SK-N-SH (cell line): ENCODE measurements at regions of chr3 and their contacts with region 1.

Region 1: DNA sequence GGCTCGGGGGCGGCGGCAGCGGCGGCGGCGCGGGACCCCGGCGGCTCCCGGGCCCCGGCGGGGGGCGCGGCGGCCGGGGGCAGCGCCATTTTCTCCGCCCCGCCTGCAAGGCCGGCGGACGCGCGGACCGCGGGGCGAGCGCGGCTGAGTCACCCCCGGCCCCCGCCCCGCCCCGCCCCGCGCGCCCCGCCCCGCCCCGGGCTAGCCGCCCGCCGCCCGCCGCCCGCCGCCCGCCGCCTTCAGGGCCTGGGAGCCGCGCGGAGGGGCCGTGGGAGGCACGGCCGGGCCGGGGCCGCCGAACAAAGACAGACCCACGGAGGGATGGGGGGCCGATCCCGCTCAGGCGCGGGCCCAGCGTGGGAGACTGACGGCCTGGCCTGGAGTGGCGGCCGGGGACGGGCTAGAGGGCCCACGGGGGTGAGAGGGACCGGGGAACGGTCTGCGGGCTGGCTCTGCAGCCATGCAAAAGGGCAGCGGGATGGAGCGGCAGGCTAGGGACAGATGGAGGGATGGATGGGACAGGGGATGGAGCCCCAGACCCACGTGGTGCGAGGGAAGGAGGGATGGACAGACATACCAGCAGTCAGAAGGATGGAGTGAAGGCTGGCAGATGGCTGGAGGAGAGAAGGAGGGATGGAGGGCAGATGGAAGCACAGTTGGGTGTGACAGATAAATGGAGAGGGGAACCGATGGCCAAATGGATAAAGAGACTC is at the start of gene EIF4E3:
- DNase-seq: peak; percentile 93
- H3K4me3 ChIP-seq: peak within 1 kb of the TSS; percentile 70 to 77
- H3K27ac ChIP-seq: peak within 1 kb of the TSS in 1 of 2 experiments; percentile 66; a peak in 1 of 4 replicates
- H3K4me1 ChIP-seq: peaks cover 0 to 24% of the 10 kb centered on the region in 2 experiments; a peak in 1 of 4 replicates
- H3K27me3 ChIP-seq: peaks cover 8% of the 10 kb centered on the region
- CTCF ChIP-seq: no peak
- EP300 ChIP-seq: no peak
- RAD21 ChIP-seq: no peak
- polyA plus RNA-seq, gene EIF4E3: 0.47 and 0.67 TPM in 2 replicates

Region 2: GRCh38 chr3:71710906-71711494 is 14.4 kb before region 1 on chr3:
- CTCF ChIA-PET with region 1: interaction called, 23 read pairs
- POLR2A ChIA-PET with region 1: interaction called, 3 read pairs
- DNase-seq: peak; percentile 72
- H3K4me3 ChIP-seq: no peak overlapping the region; a peak in 1 of 4 replicates
- H3K27ac ChIP-seq: no peak overlapping the region
- H3K4me1 ChIP-seq: no peaks in the 10 kb centered on the region; a peak in 1 of 4 replicates
- H3K27me3 ChIP-seq: no peaks in the 10 kb centered on the region
- CTCF ChIP-seq: peak; percentile 79
- EP300 ChIP-seq: no peak
- RAD21 ChIP-seq: peak; percentile 93

Region 3: DNA sequence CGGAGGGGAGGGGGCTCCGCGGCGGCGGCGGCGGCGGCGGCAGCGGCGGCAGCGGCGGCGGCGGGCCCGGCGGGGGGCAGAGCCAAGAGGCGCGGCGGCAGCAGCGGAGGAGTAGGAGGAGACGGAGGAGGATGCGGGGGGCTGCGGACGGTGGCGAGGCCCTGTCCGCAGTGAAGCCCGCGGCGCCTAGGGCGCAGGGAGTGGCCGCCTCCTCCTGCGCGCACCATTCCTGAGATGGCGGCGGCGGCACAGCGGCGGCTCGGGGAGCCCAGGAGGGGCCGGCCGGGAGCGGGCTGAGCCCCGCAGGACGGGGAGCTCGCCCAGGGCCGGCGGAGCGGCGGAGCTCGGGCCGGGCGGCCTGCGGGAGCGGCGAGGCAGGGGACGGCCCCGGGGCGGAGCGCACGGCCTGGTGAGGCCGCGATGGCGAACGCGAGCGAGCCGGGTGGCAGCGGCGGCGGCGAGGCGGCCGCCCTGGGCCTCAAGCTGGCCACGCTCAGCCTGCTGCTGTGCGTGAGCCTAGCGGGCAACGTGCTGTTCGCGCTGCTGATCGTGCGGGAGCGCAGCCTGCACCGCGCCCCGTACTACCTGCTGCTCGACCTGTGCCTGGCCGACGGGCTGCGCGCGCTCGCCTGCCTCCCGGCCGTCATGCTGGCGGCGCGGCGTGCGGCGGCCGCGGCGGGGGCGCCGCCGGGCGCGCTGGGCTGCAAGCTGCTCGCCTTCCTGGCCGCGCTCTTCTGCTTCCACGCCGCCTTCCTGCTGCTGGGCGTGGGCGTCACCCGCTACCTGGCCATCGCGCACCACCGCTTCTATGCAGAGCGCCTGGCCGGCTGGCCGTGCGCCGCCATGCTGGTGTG is 28.4 kb after region 1 on chr3 and contains the start of gene GPR27:
- CTCF ChIA-PET with region 1: interaction called, 13 read pairs
- POLR2A ChIA-PET with region 1: interaction called, 3 read pairs
- DNase-seq: peak; percentile 85
- H3K4me3 ChIP-seq: peak within 1 kb of the TSS in 1 of 2 experiments; percentile 55; a peak in 2 of 4 replicates
- H3K27ac ChIP-seq: peak within 1 kb of the TSS in 1 of 2 experiments; percentile 69; a peak in 1 of 4 replicates
- H3K4me1 ChIP-seq: peaks cover 0 to 15% of the 10 kb centered on the region in 2 experiments; a peak in 1 of 4 replicates
- H3K27me3 ChIP-seq: peaks cover 17% of the 10 kb centered on the region
- CTCF ChIP-seq: no peak
- EP300 ChIP-seq: no peak
- RAD21 ChIP-seq: no peak
- polyA plus RNA-seq, gene GPR27: 0.05 and 0.16 TPM in 2 replicates

Region 4: DNA sequence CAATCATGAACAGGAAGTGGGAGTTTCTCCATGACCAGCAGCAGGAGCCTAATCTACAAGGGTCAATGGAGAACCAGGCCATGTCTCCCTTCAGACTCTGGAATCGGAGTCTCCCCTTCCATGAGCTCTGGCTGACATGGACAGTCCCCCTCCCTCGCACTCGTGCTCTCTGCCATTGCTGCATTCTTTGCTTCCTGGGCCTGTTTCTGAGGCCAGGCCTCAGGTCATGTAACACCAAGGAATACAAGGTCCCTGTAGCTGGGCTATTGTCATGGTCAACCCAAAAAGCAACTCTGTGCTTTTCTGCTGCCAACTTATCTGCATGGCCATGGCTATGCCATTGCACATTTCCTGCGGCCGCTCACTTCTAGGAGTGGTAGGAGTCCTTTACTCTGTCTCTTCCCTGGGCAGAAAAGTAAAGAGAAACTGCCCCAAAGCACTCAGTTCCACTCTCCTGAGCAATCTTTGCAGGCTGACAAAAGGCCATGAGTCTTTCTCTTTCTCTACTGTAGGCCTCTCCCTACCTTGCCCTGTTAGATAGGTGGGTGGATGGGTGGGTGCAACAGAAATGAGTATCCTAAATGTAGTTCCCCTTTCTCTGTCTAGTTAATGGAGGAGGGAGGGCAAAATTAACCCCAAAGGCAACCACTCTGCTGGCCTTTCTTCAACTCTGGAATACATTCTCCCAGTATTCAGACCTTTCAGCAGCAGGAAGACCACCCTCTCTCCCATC is 100.3 kb after region 1 on chr3:
- CTCF ChIA-PET with region 1: no interaction called
- POLR2A ChIA-PET with region 1: no interaction called
- DNase-seq: no peak
- H3K4me3 ChIP-seq: no peak overlapping the region
- H3K27ac ChIP-seq: no peak overlapping the region
- H3K4me1 ChIP-seq: no peaks in the 10 kb centered on the region
- H3K27me3 ChIP-seq: no peaks in the 10 kb centered on the region
- CTCF ChIP-seq: no peak
- EP300 ChIP-seq: no peak
- RAD21 ChIP-seq: no peak

Region 5: GRCh38 chr3:71859123-71859519 is 133.7 kb after region 1 on chr3:
- CTCF ChIA-PET with region 1: interaction called, 72 read pairs
- POLR2A ChIA-PET with region 1: no interaction called
- DNase-seq: peak; percentile 55
- H3K4me3 ChIP-seq: no peak overlapping the region
- H3K27ac ChIP-seq: peak overlapping the region in 1 of 2 experiments; percentile 94; a peak in 2 of 4 replicates
- H3K4me1 ChIP-seq: peaks cover 0 to 15% of the 10 kb centered on the region in 2 experiments; a peak in 2 of 4 replicates
- H3K27me3 ChIP-seq: no peaks in the 10 kb centered on the region; the same call in 1 of the 2 replicates
- CTCF ChIP-seq: peak; percentile 38
- EP300 ChIP-seq: no peak
- RAD21 ChIP-seq: peak; percentile 86

Region 6: DNA sequence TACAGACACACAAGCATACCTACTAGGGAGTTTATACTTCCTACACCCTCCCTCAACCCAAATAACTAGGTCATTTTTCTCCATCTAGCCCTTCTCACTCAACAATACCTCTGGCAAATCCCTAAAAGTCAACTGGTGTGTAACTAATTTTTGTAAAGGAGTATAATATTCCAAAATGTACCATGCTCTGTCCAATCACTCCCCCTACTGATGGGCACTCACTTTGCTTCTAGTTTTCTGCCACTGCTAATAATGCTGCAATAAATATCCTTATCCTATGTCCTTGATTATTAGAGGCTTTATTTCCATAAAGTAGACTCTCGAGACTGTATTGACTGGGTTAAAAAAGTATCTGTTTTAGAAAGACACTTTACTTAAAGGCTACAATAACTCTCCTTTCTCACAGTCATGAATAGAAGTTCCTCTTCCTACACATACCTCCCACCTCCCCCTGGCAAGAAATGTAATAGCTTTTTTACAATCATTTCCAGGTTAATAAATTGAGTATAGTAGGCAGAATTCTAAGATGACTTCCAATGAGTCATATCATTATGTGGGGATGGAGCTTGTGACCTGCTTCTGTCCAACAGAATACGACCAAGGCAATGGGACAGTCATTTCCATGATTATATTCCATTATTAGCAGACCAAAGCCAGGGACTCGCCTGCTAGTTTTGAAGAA is 1092.8 kb after region 1 on chr3:
- CTCF ChIA-PET with region 1: interaction called, 10 read pairs
- POLR2A ChIA-PET with region 1: no interaction called
- DNase-seq: peak; percentile 54
- H3K4me3 ChIP-seq: no peak overlapping the region; a peak in 1 of 4 replicates
- H3K27ac ChIP-seq: peak overlapping the region in 1 of 2 experiments; percentile 61; a peak in 3 of 4 replicates
- H3K4me1 ChIP-seq: peaks cover 21 to 25% of the 10 kb centered on the region in 2 experiments
- H3K27me3 ChIP-seq: no peaks in the 10 kb centered on the region
- CTCF ChIP-seq: peak; percentile 67
- EP300 ChIP-seq: 0 out of 4 replicates have a peak, but pooled peaks of 1 of the 2 experiments have one; percentile 10
- RAD21 ChIP-seq: peak; percentile 95